ENCODE measurements at regions of chr10 and their contacts with region 1.

Region 1: DNA sequence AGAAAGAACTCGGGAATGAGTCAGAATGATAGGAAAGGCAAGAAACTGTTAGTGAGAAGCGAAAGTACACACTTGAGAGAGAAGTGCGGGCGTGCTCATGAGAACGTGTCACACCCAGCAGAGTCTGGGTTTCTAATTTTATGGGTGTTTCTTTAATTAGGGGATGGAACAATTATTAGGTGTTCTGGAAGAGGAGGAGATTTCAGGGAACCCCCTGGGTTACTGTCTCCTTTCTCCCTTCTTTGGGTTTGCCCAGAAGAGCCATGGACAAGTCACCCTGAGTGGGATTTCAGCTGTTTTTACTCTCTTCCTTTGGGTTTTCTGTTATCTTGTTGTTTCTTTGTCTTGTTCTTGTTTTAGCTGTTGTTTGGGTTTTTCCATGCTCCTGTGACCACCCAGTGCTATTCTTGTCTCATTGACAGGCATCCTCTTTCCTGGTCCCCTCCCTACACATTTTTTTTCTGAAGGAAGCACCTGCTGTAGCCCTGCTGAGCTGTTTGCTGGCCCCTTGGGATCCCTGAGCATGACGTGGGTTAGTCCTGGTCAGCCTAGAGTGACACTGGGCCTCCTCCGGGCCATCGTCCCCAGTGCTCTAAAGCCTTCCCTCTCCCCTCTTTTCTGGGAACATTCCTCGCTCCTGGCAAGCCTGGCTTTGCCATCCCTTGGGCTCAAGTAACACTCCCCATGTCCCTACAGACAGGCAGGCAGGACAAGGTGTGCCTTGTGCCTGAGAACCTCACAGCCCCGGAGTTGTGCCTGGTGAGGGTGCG is 3.5 kb downstream of the SH2D4B start:
- DNase-seq: peak; percentile 57
- H3K4me3 ChIP-seq: no peak overlapping the region
- H3K27ac ChIP-seq: no peak overlapping the region
- H3K4me1 ChIP-seq: no peaks in the 10 kb centered on the region
- H3K27me3 ChIP-seq: peaks cover 2 to 8% of the 10 kb centered on the region in 2 experiments
- CTCF ChIP-seq: no peak
- POLR2A ChIP-seq: no peak

Region 2: GRCh38 chr10:80580638-80581468 is 39.7 kb after region 1 on chr10:
- CTCF ChIA-PET with region 1: interaction called, 5 read pairs
- POLR2A ChIA-PET with region 1: no interaction called
- dilution Hi-C with region 1: no loop called
- intact Hi-C with region 1: loop called (anchors 1 kb)
- DNase-seq: no peak
- H3K4me3 ChIP-seq: no peak overlapping the region
- H3K27ac ChIP-seq: no peak overlapping the region
- H3K4me1 ChIP-seq: no peaks in the 10 kb centered on the region
- H3K27me3 ChIP-seq: peaks cover 8 to 11% of the 10 kb centered on the region in 2 experiments
- CTCF ChIP-seq: no peak
- POLR2A ChIP-seq: no peak

Region 3: DNA sequence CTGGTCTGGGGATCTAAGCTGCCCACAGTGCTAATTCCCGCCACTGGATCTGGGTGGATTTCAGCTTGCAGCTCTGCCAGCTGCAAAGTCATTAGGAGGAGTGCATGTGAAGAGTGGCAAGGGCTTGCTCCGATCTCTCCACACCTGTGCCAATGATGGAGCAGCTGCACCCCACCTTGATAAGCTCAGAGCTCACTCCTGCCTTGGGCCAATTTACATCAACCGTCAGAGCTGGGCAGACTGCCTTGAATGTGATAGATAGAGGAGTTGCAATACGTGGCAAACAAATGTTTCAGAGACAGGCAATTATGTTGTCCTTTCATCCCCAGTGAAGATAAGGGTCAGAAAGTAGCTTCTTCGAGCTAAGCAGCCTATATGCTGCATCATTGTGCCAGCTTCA is 376.5 kb after region 1 on chr10:
- CTCF ChIA-PET with region 1: no interaction called
- POLR2A ChIA-PET with region 1: no interaction called
- dilution Hi-C with region 1: no loop called
- intact Hi-C with region 1: no loop called
- DNase-seq: no peak
- H3K4me3 ChIP-seq: no peak overlapping the region
- H3K27ac ChIP-seq: no peak overlapping the region
- H3K4me1 ChIP-seq: no peaks in the 10 kb centered on the region
- H3K27me3 ChIP-seq: no peaks in the 10 kb centered on the region
- CTCF ChIP-seq: no peak
- POLR2A ChIP-seq: no peak

Measured in endothelial cell of umbilical vein (primary cell).